Endothelial cell of umbilical vein (primary cell): ENCODE measurements at regions of chr11 and their contacts with region 1.

Region 1: GRCh38 chr11:33065445-33066178 is 26.2 kb downstream of the TCP11L1 start:
- DNase-seq: peak; percentile 56
- H3K4me3 ChIP-seq: no peak overlapping the region
- H3K27ac ChIP-seq: no peak overlapping the region
- H3K4me1 ChIP-seq: peaks cover 2% of the 10 kb centered on the region
- H3K27me3 ChIP-seq: no peaks in the 10 kb centered on the region
- CTCF ChIP-seq: peak; percentile 87 to 93
- POLR2A ChIP-seq: no peak

Region 2: DNA sequence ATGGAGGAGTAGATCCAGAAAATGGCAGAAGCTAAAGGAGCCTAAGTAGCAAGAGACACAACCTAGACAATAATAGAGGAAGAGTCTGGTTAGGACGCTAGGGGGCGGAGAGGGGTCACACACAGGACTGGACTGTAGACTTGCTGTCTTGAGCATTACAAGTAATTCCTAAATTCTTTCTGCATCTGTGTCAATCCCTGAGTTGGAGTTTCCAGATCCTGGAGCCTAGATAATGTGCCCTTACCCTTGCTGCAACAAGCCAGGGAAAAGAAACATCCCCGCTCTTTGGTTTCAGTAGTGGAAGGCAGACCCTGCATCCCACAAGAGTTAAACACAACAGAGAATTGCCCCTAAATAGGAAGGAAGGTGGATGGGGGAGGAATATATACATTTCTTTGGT is 256.3 kb before region 1 on chr11:
- CTCF ChIA-PET with region 1: interaction called, 32 read pairs
- POLR2A ChIA-PET with region 1: no interaction called
- dilution Hi-C with region 1: no loop called
- intact Hi-C with region 1: loop called (anchors 1 kb)
- DNase-seq: peak; percentile 80
- H3K4me3 ChIP-seq: no peak overlapping the region
- H3K27ac ChIP-seq: no peak overlapping the region
- H3K4me1 ChIP-seq: no peaks in the 10 kb centered on the region
- H3K27me3 ChIP-seq: peaks cover 0 to 2% of the 10 kb centered on the region in 2 experiments
- CTCF ChIP-seq: peak; percentile 67 to 79
- POLR2A ChIP-seq: no peak

Region 3: GRCh38 chr11:32884770-32885384 is 180.7 kb before region 1 on chr11:
- CTCF ChIA-PET with region 1: interaction called, 10 read pairs
- POLR2A ChIA-PET with region 1: no interaction called
- dilution Hi-C with region 1: no loop called
- intact Hi-C with region 1: loop called (anchors 2 kb)
- DNase-seq: peak; percentile 19
- H3K4me3 ChIP-seq: no peak overlapping the region
- H3K27ac ChIP-seq: no peak overlapping the region
- H3K4me1 ChIP-seq: no peaks in the 10 kb centered on the region
- H3K27me3 ChIP-seq: peaks cover 4 to 8% of the 10 kb centered on the region in 2 experiments
- CTCF ChIP-seq: peak; percentile 26 to 45
- POLR2A ChIP-seq: no peak

Region 4: GRCh38 chr11:32960553-32961164 is 105.0 kb before region 1 on chr11:
- CTCF ChIA-PET with region 1: interaction called, 32 read pairs
- POLR2A ChIA-PET with region 1: no interaction called
- dilution Hi-C with region 1: no loop called
- intact Hi-C with region 1: loop called (anchors 1 kb)
- DNase-seq: peak; percentile 60
- H3K4me3 ChIP-seq: no peak overlapping the region
- H3K27ac ChIP-seq: no peak overlapping the region
- H3K4me1 ChIP-seq: no peaks in the 10 kb centered on the region
- H3K27me3 ChIP-seq: no peaks in the 10 kb centered on the region
- CTCF ChIP-seq: peak; percentile 39 to 40
- POLR2A ChIP-seq: no peak

Region 5: DNA sequence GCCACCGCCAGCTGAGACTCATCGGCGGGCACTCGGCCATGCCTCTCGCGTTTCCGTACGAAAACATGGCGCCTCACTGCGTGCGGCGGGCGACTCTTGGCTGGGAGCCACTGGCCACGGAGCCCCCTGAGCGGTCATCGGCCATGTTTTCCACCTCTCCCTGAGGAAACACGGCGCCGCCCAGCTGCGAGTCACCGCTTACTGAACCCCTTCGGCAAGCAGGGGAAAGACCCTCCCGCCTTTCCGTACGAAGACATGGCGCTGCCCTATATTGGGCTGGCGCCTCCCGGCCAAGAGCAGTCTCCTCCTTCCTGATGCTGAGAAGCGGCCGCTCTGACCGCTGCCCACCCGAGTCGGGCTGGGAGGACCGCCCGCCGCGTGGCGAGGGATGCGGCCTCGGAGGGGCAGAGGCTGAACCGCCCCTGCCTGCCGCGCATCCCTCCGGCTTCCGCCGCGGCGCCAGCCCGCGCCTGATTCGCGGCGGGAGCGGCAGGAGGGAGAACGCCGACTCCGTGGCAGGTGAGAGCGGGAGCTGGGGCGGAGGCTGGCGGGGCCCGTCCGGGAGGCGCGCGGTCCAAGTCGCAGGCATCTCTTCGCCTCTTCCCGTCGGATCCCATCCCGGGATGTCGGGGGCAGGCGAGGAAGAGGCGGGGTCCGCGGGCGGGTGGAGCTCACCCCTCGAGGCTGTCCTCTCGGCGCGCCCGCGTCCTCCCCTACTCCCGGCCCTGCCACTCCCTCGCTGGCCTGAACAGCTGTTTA is 26.2 kb before region 1 on chr11 and contains the start of gene TCP11L1:
- CTCF ChIA-PET with region 1: interaction called, 15 read pairs
- POLR2A ChIA-PET with region 1: no interaction called
- dilution Hi-C with region 1: no loop called
- intact Hi-C with region 1: loop called (anchors 1 kb)
- DNase-seq: peak; percentile 95
- H3K4me3 ChIP-seq: peak within 1 kb of the TSS; percentile 45 to 65 (median 57)
- H3K27ac ChIP-seq: peak within 1 kb of the TSS; percentile 79
- H3K4me1 ChIP-seq: peaks cover 12% of the 10 kb centered on the region
- H3K27me3 ChIP-seq: no peaks in the 10 kb centered on the region
- CTCF ChIP-seq: no peak
- POLR2A ChIP-seq: peak; percentile 73
- total RNA-seq, gene TCP11L1: 18.1 and 20.0 TPM in 2 replicates

Region 6: GRCh38 chr11:33434294-33434693 is 368.7 kb after region 1 on chr11:
- CTCF ChIA-PET with region 1: no interaction called
- POLR2A ChIA-PET with region 1: no interaction called
- dilution Hi-C with region 1: no loop called
- intact Hi-C with region 1: no loop called
- DNase-seq: no peak
- H3K4me3 ChIP-seq: no peak overlapping the region
- H3K27ac ChIP-seq: no peak overlapping the region
- H3K4me1 ChIP-seq: no peaks in the 10 kb centered on the region
- H3K27me3 ChIP-seq: no peaks in the 10 kb centered on the region
- CTCF ChIP-seq: no peak
- POLR2A ChIP-seq: no peak